Left ventricle myocardium superior (tissue), 1 donor: ENCODE measurements at regions of chr7 and their contacts with region 1.

Region 1: GRCh38 chr7:155598810-155599210 is 45.7 kb upstream of the RBM33 start:
- DNase-seq: peak; percentile 89
- ATAC-seq: peak; percentile 70

Region 2: GRCh38 chr7:155738652-155739537 is 140.1 kb after region 1 on chr7:
- intact Hi-C with region 1: loop called (anchors 5 kb)
- DNase-seq: peak; percentile 83
- ATAC-seq: peak; percentile 81

Region 3: GRCh38 chr7:155769701-155770100 is 170.9 kb after region 1 on chr7:
- intact Hi-C with region 1: loop called (anchors 5 kb)
- DNase-seq: no peak
- ATAC-seq: peak; percentile 23